ENCODE measurements at regions of chr2 and their contacts with region 1.

Region 1: GRCh38 chr2:148989882-148990493 is 48.5 kb upstream of the LYPD6B start:
- DNase-seq: peak; percentile 53 to 64 (median 59)
- H3K4me3 ChIP-seq: no peak overlapping the region
- H3K4me3 Mint-ChIP-seq: no peak overlapping the region
- H3K27ac ChIP-seq: no peak overlapping the region
- H3K27ac Mint-ChIP-seq: peak overlapping the region in 2 of 7 donors; percentile 31 to 46
- H3K4me1 ChIP-seq: no peaks in the 10 kb centered on the region
- H3K4me1 Mint-ChIP-seq: peaks cover 2 to 6% (median 3%) of the 10 kb centered on the region in 4 donors
- H3K27me3 ChIP-seq: no peaks in the 10 kb centered on the region
- H3K27me3 Mint-ChIP-seq: no peaks in the 10 kb centered on the region

Region 2: GRCh38 chr2:147937744-147938349 is 1052.1 kb before region 1 on chr2:
- CTCF ChIA-PET with region 1: interaction called, 24 read pairs
- POLR2A ChIA-PET with region 1: no interaction called
- intact Hi-C with region 1: loop called (anchors 1 kb)
- DNase-seq: peak in 4 of 5 donors; percentile 23 to 37 (median 28)
- H3K4me3 ChIP-seq: no peak overlapping the region
- H3K4me3 Mint-ChIP-seq: no peak overlapping the region
- H3K27ac ChIP-seq: no peak overlapping the region
- H3K27ac Mint-ChIP-seq: peak overlapping the region in 1 of 7 donors; percentile 13
- H3K4me1 ChIP-seq: no peaks in the 10 kb centered on the region
- H3K4me1 Mint-ChIP-seq: peaks cover 0 to 1% (median 0%) of the 10 kb centered on the region in 4 donors
- H3K27me3 ChIP-seq: no peaks in the 10 kb centered on the region
- H3K27me3 Mint-ChIP-seq: no peaks in the 10 kb centered on the region

Region 3: DNA sequence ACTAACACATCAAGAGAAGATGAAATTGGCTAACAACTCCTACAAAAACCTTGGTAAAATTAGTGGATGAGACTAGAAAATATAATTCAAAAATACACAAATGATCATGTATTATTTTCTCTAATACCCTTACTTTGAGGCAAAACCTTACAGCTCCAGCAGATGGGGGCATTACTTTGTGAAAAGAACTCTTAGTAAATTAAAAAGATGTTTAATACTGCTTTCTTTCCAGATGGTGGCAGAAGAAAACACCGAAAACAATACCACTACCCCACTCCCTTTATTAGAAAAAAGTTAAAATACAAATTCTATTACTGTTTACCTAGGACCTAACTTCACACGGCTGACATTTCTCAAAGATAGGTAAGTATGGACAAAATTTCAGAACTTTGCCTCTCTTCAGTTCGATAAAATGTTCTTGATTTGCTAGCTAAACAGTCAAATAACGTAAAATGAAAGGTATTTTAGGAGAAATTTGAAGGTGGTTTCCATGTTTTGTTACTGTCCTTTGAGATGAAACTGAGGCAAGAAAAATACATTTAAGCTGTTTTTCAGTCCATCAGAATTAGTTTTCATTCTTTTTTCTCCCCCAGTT is 1000.1 kb before region 1 on chr2:
- CTCF ChIA-PET with region 1: interaction called, 18 read pairs
- POLR2A ChIA-PET with region 1: no interaction called
- intact Hi-C with region 1: no loop called
- DNase-seq: peak; percentile 45 to 61 (median 58)
- H3K4me3 ChIP-seq: no peak overlapping the region
- H3K4me3 Mint-ChIP-seq: no peak overlapping the region
- H3K27ac ChIP-seq: no peak overlapping the region
- H3K27ac Mint-ChIP-seq: peak overlapping the region in 3 of 7 donors; percentile 7 to 72 (median 53)
- H3K4me1 ChIP-seq: no peaks in the 10 kb centered on the region
- H3K4me1 Mint-ChIP-seq: peaks cover 14 to 29% (median 19%) of the 10 kb centered on the region in 4 donors
- H3K27me3 ChIP-seq: no peaks in the 10 kb centered on the region
- H3K27me3 Mint-ChIP-seq: no peaks in the 10 kb centered on the region

Region 4: GRCh38 chr2:148926291-148926961 is 63.6 kb before region 1 on chr2:
- CTCF ChIA-PET with region 1: interaction called, 5 read pairs
- POLR2A ChIA-PET with region 1: no interaction called
- intact Hi-C with region 1: loop called (anchors 1 kb)
- DNase-seq: peak; percentile 43 to 59 (median 56)
- H3K4me3 ChIP-seq: peak overlapping the region in 1 of 2 donors; percentile 39
- H3K4me3 Mint-ChIP-seq: peak overlapping the region; percentile 84 to 95 (median 88)
- H3K27ac ChIP-seq: peak overlapping the region; percentile 25
- H3K27ac Mint-ChIP-seq: peak overlapping the region; percentile 72 to 94 (median 93)
- H3K4me1 ChIP-seq: peaks cover 20% of the 10 kb centered on the region
- H3K4me1 Mint-ChIP-seq: peaks cover 16 to 30% (median 21%) of the 10 kb centered on the region in 4 donors
- H3K27me3 ChIP-seq: no peaks in the 10 kb centered on the region
- H3K27me3 Mint-ChIP-seq: no peaks in the 10 kb centered on the region